ENCODE measurements at regions of chr13 and their contacts with region 1.

Region 1: DNA sequence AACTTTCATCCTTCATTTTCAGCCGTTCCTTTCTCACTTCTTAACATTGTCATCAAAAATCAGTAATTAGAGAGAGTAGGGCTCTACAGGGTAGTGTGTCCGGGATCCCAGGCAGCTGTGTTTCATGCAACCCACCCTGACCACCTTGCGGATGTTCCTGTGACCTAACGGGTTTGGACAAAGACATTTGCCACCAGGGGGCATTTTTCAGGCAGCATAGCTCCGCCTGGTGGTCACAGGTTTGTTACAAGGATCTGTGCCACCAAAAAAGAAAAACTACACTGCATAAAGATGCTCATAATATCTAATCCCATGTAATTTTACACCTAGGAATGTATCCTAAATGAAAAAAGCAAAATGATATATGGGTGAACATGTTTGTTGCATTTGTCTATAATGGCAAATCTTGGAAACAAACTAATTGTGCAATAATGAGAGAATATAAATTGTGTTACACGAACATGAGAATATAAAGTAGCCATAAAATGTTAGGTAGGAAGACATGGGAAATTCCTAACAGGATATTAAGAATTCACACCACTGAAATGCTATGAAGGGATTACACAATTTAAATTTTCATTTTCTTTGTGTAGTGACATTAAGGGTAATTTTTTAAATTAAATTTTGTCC is 123.0 kb downstream of the SLC7A1 start:
- DNase-seq: peak; percentile 67
- ATAC-seq: no peak
- H3K4me3 Mint-ChIP-seq: no peak overlapping the region
- H3K27ac Mint-ChIP-seq: no peak overlapping the region
- H3K4me1 Mint-ChIP-seq: peaks cover 2% of the 10 kb centered on the region
- H3K27me3 Mint-ChIP-seq: peaks cover 13% of the 10 kb centered on the region

Region 2: GRCh38 chr13:29713839-29714238 is 241.4 kb after region 1 on chr13:
- CTCF ChIA-PET with region 1: interaction called, 11 read pairs
- DNase-seq: no peak
- ATAC-seq: no peak
- H3K4me3 Mint-ChIP-seq: no peak overlapping the region
- H3K27ac Mint-ChIP-seq: no peak overlapping the region
- H3K4me1 Mint-ChIP-seq: peaks cover 7% of the 10 kb centered on the region
- H3K27me3 Mint-ChIP-seq: peaks cover 34% of the 10 kb centered on the region

Measured in activated CD8-positive, alpha-beta memory T cell treated with anti-CD3 and anti-CD28 coated beads, Interleukin-2, amount 10 ng/mL, durations not matched to agents 7 days and 5 days (primary cell).